ENCODE measurements at regions of chr7 and their contacts with region 1.

Region 1: DNA sequence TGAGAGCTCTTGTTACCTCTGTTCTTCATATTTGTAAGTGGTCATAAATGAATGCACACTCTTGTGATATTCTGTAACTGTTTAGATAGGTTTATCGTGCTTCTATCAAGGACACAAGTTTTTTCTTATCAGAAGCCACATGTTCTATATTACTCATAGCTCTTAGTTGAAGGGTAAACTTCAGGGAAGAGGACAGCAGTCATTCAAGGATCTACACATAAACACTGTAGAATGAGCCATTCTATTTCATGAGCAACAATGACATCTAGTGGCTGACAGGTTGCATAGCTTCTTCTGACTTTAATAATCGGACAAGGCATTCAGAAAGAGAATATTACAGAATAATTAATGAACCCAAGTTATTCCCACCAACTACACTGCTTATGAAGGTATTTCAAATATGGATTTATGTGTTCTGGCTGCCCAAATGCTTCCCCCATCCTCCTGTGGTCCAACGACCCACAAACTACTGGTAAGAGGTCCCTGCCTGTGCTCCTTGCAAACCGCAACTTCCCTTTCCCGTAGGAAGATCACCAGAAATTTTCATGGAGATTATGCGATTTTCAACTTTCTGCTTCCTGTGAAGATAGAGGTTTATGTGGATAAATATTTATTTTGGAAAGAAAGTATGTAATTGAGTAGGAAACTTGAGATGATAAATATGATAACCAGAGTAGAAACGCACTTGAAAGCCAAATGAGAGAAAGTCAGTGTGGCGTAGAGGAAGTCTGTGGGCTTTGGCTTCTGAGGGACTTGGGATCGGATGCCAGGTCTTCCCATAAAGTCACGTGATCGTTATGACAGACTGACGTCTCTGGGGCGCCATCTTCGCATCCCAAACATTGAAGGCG is 16.8 kb upstream of the ABCB5 start:
- DNase-seq: peak; percentile 43
- ATAC-seq: peak; percentile 88
- H3K4me3 ChIP-seq: no peak overlapping the region
- H3K27ac ChIP-seq: no peak overlapping the region
- H3K4me1 ChIP-seq: no peaks in the 10 kb centered on the region
- H3K27me3 ChIP-seq: no peaks in the 10 kb centered on the region
- CTCF ChIP-seq: peak; percentile 69 to 91 (median 84)
- EP300 ChIP-seq: no peak
- POLR2A ChIP-seq: no peak
- RAD21 ChIP-seq: peak; percentile 98

Region 2: DNA sequence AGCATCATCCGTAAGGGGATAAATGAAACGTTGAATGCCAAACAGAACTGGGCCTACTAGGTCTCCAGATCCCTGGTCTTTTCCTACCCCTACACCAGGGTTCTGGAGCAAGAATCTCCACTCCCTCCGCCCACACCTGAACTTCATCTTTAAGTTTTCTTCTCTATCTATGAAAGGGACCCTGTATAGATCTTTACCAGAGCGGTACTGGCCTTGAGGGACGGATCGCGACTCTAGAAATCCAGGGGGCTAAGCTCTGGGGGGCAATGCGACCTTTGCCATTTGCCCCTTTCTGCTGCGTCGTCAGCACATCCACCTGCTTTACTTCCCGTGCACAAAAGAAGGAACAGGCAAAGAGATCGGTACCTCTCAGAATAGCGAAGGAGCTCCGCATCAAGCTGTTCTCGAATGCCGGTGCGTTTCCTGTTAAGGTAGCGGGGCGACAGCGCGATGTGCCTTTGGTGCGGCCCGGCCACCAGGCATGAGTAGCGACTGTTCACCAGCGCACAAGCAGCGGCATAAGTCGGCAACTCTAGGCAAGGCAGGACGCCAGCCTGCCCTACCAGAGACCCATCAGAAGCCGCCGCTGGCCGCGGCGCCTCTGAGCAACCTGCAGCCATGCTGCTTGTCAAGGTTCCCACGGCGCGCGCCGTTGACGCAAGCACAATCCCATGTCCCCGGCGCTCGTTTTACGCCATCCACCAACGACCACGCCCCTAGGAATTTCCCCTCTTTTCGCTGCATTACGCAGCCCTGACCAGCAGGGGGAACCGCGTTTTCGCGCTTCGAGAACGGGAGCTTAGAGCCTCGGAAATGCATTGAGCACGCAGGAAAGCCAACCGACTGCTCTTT is 890.1 kb before region 1 on chr7 and contains the start of gene POLR1F:
- CTCF ChIA-PET with region 1: interaction called, 184 read pairs
- POLR2A ChIA-PET with region 1: interaction called, 3 read pairs
- RAD21 ChIA-PET with region 1: interaction called, 123 read pairs
- SMC1A ChIA-PET with region 1: interaction called, 87 read pairs
- in situ Hi-C with region 1: loop called (anchors 5 kb)
- intact Hi-C with region 1: no loop called
- DNase-seq: peak; percentile 90
- ATAC-seq: peak; percentile 95
- H3K4me3 ChIP-seq: peak within 1 kb of the TSS; percentile 90
- H3K27ac ChIP-seq: peak within 1 kb of the TSS; percentile 62
- H3K4me1 ChIP-seq: 0 out of 2 replicates have a peak, but pooled peaks cover 3% of the 10 kb centered on the region
- H3K27me3 ChIP-seq: no peaks in the 10 kb centered on the region
- CTCF ChIP-seq: peak; percentile 92 to 98 (median 97); a peak in 5 of 6 replicates
- EP300 ChIP-seq: 0 out of 4 replicates have a peak, but pooled peaks of 1 of the 2 experiments have one; percentile 33
- POLR2A ChIP-seq: peak; percentile 99
- RAD21 ChIP-seq: peak; percentile 59
- polyA plus RNA-seq, gene POLR1F: 95.3 to 129 TPM

Region 3: GRCh38 chr7:19725770-19726169 is 872.9 kb before region 1 on chr7:
- CTCF ChIA-PET with region 1: interaction called, 17 read pairs
- POLR2A ChIA-PET with region 1: no interaction called
- RAD21 ChIA-PET with region 1: no interaction called
- SMC1A ChIA-PET with region 1: no interaction called
- in situ Hi-C with region 1: no loop called
- intact Hi-C with region 1: no loop called
- DNase-seq: no peak
- ATAC-seq: no peak
- H3K4me3 ChIP-seq: no peak overlapping the region
- H3K27ac ChIP-seq: no peak overlapping the region
- H3K4me1 ChIP-seq: no peaks in the 10 kb centered on the region
- H3K27me3 ChIP-seq: no peaks in the 10 kb centered on the region
- CTCF ChIP-seq: no peak
- EP300 ChIP-seq: no peak
- POLR2A ChIP-seq: no peak
- RAD21 ChIP-seq: no peak

Region 4: DNA sequence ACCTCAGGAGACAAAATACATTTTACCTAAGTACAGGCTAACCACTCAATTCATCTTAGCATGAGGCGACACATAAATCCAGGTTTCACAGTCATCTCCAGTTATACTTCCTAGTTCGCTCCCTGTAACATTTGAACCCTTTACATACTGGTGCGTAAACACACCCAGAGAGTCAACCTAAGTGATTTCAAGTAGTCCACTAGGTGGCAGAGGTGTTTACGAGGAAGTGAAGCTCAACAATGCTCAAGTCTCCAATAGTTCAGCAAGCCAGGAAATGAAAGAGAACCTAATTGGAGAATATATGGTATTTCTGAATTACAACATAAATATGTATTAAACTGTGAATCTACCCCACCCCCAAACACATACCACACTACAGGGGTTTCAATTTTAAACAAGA is 59.5 kb before region 1 on chr7:
- CTCF ChIA-PET with region 1: interaction called, 3 read pairs
- POLR2A ChIA-PET with region 1: no interaction called
- RAD21 ChIA-PET with region 1: interaction called, 4 read pairs
- SMC1A ChIA-PET with region 1: no interaction called
- in situ Hi-C with region 1: no loop called
- intact Hi-C with region 1: loop called (anchors 5 kb)
- DNase-seq: no peak
- ATAC-seq: peak; percentile 66
- H3K4me3 ChIP-seq: no peak overlapping the region
- H3K27ac ChIP-seq: no peak overlapping the region
- H3K4me1 ChIP-seq: no peaks in the 10 kb centered on the region
- H3K27me3 ChIP-seq: no peaks in the 10 kb centered on the region
- CTCF ChIP-seq: peak in 1 of 3 experiments; percentile 26; a peak in 1 of 6 replicates
- EP300 ChIP-seq: no peak
- POLR2A ChIP-seq: no peak
- RAD21 ChIP-seq: no peak

Region 5: DNA sequence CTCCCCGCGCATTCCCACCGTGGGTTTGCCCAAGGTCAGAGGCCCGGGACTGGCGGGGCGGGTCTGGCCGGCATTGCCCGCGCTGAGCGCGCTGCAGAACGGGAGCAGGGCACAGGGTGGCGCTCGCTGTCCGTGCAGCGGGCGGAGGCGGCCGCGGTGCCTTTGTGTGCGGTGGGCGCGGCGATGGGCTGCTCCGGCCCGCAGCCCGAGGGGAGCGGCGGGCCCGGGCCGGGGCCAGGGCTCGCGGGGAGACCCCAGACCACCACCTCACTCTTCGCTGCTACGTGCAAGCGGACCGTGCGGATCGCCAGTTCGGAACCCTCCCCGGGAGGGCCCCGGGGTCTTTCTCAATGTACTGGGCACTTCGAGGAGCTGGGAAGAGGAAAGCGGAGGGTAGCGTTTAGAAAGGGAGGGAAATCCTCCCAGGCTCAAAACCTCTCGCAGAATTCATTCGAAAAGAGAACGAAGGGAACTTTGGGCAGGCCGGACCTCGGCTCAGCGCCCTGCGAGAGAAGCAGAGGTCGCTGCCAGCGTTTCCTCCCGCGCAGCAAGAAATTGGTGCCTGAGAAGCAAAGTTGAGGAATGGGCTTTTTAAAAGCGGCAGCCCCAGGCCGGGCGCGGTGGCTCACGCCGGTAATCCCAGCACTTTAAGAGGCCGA is 179.5 kb after region 1 on chr7:
- CTCF ChIA-PET with region 1: no interaction called
- POLR2A ChIA-PET with region 1: no interaction called
- RAD21 ChIA-PET with region 1: no interaction called
- SMC1A ChIA-PET with region 1: no interaction called
- in situ Hi-C with region 1: no loop called
- intact Hi-C with region 1: no loop called
- DNase-seq: no peak
- ATAC-seq: peak; percentile 87
- H3K4me3 ChIP-seq: no peak overlapping the region
- H3K27ac ChIP-seq: no peak overlapping the region
- H3K4me1 ChIP-seq: no peaks in the 10 kb centered on the region
- H3K27me3 ChIP-seq: peaks cover 3 to 5% of the 10 kb centered on the region in 2 experiments
- CTCF ChIP-seq: peak; percentile 29 to 50 (median 45); a peak in 4 of 6 replicates
- EP300 ChIP-seq: no peak
- POLR2A ChIP-seq: no peak
- RAD21 ChIP-seq: peak; percentile 56